ENCODE measurements at regions of chr6 and their contacts with region 1.

Region 1: GRCh38 chr6:31834434-31835198 is 7.1 kb downstream of the HSPA1B start:
- DNase-seq: peak; percentile 75
- ATAC-seq: peak; percentile 62
- H3K4me3 Mint-ChIP-seq: peak overlapping the region; percentile 99
- H3K27ac Mint-ChIP-seq: peak overlapping the region; percentile 98
- H3K4me1 Mint-ChIP-seq: peaks cover 71% of the 10 kb centered on the region
- H3K27me3 Mint-ChIP-seq: no peaks in the 10 kb centered on the region
- CTCF ChIP-seq: no peak

Region 2: GRCh38 chr6:31680840-31681671 is 153.6 kb before region 1 on chr6 and contains the start of gene LY6G5C:
- CTCF ChIA-PET with region 1: interaction called, 22 read pairs
- POLR2A ChIA-PET with region 1: interaction called, 23 read pairs
- intact Hi-C with region 1: loop called (anchors 1 kb)
- DNase-seq: peak; percentile 46
- ATAC-seq: peak; percentile 75
- H3K4me3 Mint-ChIP-seq: peak within 1 kb of the TSS; percentile 84
- H3K27ac Mint-ChIP-seq: peak within 1 kb of the TSS; percentile 72
- H3K4me1 Mint-ChIP-seq: peaks cover 40% of the 10 kb centered on the region
- H3K27me3 Mint-ChIP-seq: no peaks in the 10 kb centered on the region
- CTCF ChIP-seq: no peak
- total RNA-seq, gene LY6G5C: 0.29 and 0.73 TPM in 2 replicates

Region 3: DNA sequence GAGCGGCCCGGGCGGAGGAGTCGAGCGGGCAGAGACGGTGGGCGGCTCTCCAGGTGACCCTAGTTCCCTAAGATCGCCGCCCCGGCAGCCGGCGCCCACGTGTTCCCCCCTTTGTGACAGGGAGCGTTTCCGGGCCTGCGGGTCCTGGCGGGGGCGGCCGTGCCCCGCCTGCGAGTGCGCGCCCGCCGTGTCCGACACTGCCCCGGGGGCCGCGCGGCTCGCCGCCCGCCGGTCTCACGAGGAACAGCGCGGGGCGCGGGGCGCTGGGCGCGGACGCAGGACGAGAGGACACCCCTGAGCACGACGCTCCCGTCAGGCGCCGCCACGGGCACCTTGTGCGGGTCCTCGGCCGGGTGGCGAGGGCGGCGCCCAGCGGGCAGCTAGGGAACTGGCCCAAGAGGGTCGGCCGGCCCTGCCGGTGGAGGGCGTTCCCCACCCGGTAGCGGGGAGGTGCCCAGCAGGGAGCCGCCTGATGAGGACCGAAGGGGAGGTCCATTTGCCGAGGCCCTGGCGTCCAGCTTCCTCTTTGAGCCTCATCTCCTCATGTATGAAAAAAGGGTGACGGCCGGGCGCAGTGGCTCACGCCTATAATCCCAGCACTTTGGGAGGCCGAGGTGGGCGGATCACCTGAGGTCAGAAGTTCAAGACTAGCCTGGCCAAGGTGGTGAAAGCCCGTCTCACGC is 38.9 kb before region 1 on chr6 and contains the start of gene VARS1:
- CTCF ChIA-PET with region 1: interaction called, 9 read pairs
- POLR2A ChIA-PET with region 1: interaction called, 17 read pairs
- intact Hi-C with region 1: loop called (anchors 2 kb)
- DNase-seq: peak; percentile 89
- ATAC-seq: peak; percentile 89
- H3K4me3 Mint-ChIP-seq: peak within 1 kb of the TSS; percentile 98
- H3K27ac Mint-ChIP-seq: peak within 1 kb of the TSS; percentile 98
- H3K4me1 Mint-ChIP-seq: peaks cover 65% of the 10 kb centered on the region
- H3K27me3 Mint-ChIP-seq: no peaks in the 10 kb centered on the region
- CTCF ChIP-seq: no peak
- total RNA-seq, gene VARS1: 136 and 140 TPM in 2 replicates

Region 4: DNA sequence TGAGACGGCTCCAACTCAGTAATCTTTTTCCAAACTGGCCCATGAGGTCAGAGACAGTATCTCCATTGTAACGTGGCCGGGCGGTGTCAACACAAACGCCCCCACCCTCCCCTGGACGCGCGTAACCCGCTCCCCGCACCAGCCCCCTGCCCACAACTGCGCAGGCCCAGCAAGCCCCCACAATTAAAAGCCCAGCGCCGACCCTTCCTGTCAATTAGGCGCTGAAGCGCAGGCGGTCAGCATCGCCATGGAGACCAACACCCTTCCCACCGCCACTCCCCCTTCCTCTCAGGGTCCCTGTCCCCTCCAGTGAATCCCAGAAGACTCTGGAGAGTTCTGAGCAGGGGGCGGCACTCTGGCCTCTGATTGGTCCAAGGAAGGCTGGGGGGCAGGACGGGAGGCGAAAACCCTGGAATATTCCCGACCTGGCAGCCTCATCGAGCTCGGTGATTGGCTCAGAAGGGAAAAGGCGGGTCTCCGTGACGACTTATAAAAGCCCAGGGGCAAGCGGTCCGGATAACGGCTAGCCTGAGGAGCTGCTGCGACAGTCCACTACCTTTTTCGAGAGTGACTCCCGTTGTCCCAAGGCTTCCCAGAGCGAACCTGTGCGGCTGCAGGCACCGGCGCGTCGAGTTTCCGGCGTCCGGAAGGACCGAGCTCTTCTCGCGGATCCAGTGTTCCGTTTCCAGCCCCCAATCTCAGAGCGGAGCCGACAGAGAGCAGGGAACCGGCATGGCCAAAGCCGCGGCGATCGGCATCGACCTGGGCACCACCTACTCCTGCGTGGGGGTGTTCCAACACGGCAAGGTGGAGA is 19.4 kb before region 1 on chr6 and contains the starts of genes HSPA1A and HSPA1L:
- CTCF ChIA-PET with region 1: interaction called, 10 read pairs
- POLR2A ChIA-PET with region 1: interaction called, 34 read pairs
- intact Hi-C with region 1: loop called (anchors 2 kb)
- DNase-seq: peak; percentile 59
- ATAC-seq: peak; percentile 49
- H3K4me3 Mint-ChIP-seq: peak within 1 kb of the TSS; percentile 91
- H3K27ac Mint-ChIP-seq: peak within 1 kb of the TSS; percentile 90
- H3K4me1 Mint-ChIP-seq: peaks cover 30% of the 10 kb centered on the region
- H3K27me3 Mint-ChIP-seq: no peaks in the 10 kb centered on the region
- CTCF ChIP-seq: no peak
- total RNA-seq, gene HSPA1A: 27.1 and 28.1 TPM in 2 replicates
- total RNA-seq, gene HSPA1L: 1.2 and 2.1 TPM in 2 replicates

Region 5: GRCh38 chr6:31901953-31902643 is 67.5 kb after region 1 on chr6 and contains the start of gene ZBTB12:
- CTCF ChIA-PET with region 1: no interaction called
- POLR2A ChIA-PET with region 1: interaction called, 12 read pairs
- intact Hi-C with region 1: loop called (anchors 1 kb)
- DNase-seq: peak; percentile 83
- ATAC-seq: peak; percentile 69
- H3K4me3 Mint-ChIP-seq: peak within 1 kb of the TSS; percentile 89
- H3K27ac Mint-ChIP-seq: peak within 1 kb of the TSS; percentile 86
- H3K4me1 Mint-ChIP-seq: peaks cover 27% of the 10 kb centered on the region
- H3K27me3 Mint-ChIP-seq: no peaks in the 10 kb centered on the region
- CTCF ChIP-seq: no peak
- total RNA-seq, gene ZBTB12: 4.8 and 5.5 TPM in 2 replicates

Measured in activated B cell treated with CpG ODN at 0.5 μM for 24 hours (primary cell).